ENCODE measurements at regions of chr6 and their contacts with region 1.

Region 1: GRCh38 chr6:125956506-125957390 is at the start of gene HINT3:
- DNase-seq: peak; percentile 94
- ATAC-seq: peak; percentile 87
- H3K4me3 ChIP-seq: peak within 1 kb of the TSS; percentile 71 to 99 (median 81)
- H3K27ac ChIP-seq: peak within 1 kb of the TSS; percentile 88
- H3K4me1 ChIP-seq: peaks cover 50% of the 10 kb centered on the region
- H3K27me3 ChIP-seq: no peaks in the 10 kb centered on the region; a peak in 1 of 5 replicates
- CTCF ChIP-seq: peak; percentile 100
- EP300 ChIP-seq: peak; percentile 22 to 73; a peak in 2 of 4 replicates
- POLR2A ChIP-seq: peak; percentile 52 to 63; a peak in 3 of 4 replicates
- RAD21 ChIP-seq: peak; percentile 98
- total RNA-seq, gene HINT3: 22.8 and 33.0 TPM in 2 replicates

Region 2: GRCh38 chr6:125301435-125302391 is 655.0 kb before region 1 on chr6 and contains the start of gene HDDC2:
- CTCF ChIA-PET with region 1: no interaction called
- POLR2A ChIA-PET with region 1: no interaction called
- in situ Hi-C with region 1: loop called (anchors 10 kb)
- intact Hi-C with region 1: no loop called
- DNase-seq: peak; percentile 68
- ATAC-seq: peak; percentile 99
- H3K4me3 ChIP-seq: peak within 1 kb of the TSS; percentile 54 to 85 (median 84)
- H3K27ac ChIP-seq: peak within 1 kb of the TSS; percentile 67
- H3K4me1 ChIP-seq: peaks cover 32% of the 10 kb centered on the region
- H3K27me3 ChIP-seq: peaks cover 0 to 4% of the 10 kb centered on the region in 2 experiments; a peak in 1 of 5 replicates
- CTCF ChIP-seq: peak; percentile 7; the same call in 1 of the 2 replicates
- EP300 ChIP-seq: peak in 1 of 2 experiments; percentile 38; a peak in 2 of 4 replicates
- POLR2A ChIP-seq: peak; percentile 82 to 83
- RAD21 ChIP-seq: peak; percentile 71
- total RNA-seq, gene HDDC2: 78.7 and 90.7 TPM in 2 replicates

Region 3: GRCh38 chr6:125779924-125780539 is 176.7 kb before region 1 on chr6:
- CTCF ChIA-PET with region 1: no interaction called
- POLR2A ChIA-PET with region 1: interaction called, 18 read pairs
- in situ Hi-C with region 1: no loop called
- intact Hi-C with region 1: loop called (anchors 1 kb)
- DNase-seq: peak; percentile 96
- ATAC-seq: peak; percentile 91
- H3K4me3 ChIP-seq: peak overlapping the region; percentile 60 to 85 (median 81)
- H3K27ac ChIP-seq: peak overlapping the region; percentile 83
- H3K4me1 ChIP-seq: peaks cover 30% of the 10 kb centered on the region
- H3K27me3 ChIP-seq: no peaks in the 10 kb centered on the region; a peak in 1 of 5 replicates
- CTCF ChIP-seq: no peak; the same call in 1 of the 2 replicates
- EP300 ChIP-seq: no peak; a peak in 1 of 4 replicates
- POLR2A ChIP-seq: no peak
- RAD21 ChIP-seq: no peak

Region 4: DNA sequence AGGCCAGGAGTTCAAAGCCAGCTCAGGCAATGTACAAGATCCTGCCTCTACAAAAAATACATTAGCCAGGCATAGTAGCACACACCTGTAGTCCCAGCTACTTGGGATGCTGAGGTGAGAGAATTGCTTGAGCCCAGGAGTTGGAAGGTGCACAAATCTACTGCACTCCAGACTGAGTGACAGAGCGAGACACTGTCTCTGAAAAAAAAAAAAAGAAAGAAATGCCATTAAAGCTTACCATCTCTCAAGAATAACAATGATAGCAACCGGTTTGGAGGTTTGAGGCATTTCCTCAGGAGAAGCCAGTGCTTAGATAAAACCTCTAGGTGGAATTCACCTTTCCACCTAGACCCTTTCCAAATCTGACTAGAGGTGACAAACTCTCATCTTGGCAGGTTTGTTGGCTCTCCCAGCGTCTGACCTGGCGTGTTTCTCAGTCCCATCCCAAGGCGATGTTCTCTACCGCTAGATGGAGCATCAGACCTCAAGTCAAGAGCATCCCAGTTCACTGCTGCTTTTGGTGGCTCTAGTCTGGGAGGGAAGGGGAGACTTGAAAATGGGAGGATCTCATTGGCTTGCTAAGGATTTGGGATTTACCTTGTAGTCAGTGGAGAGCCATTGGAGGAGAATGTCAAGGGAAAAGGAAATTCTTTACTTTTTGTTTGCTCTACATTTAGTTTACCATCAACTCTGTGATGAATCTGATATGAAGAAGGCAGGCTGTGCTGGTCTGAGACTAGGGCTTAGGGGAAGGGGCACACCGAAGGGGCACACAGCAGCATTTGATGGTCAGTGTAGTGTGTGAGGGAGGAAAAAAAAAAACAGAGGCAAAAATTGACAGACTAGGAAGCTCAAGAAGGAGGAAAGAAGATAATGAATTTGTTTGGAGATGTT is 98.1 kb before region 1 on chr6:
- CTCF ChIA-PET with region 1: interaction called, 23 read pairs
- POLR2A ChIA-PET with region 1: interaction called, 5 read pairs
- in situ Hi-C with region 1: loop called (anchors 5 kb)
- intact Hi-C with region 1: loop called (anchors 1 kb)
- DNase-seq: peak; percentile 80
- ATAC-seq: peak; percentile 100
- H3K4me3 ChIP-seq: no peak overlapping the region
- H3K27ac ChIP-seq: no peak overlapping the region
- H3K4me1 ChIP-seq: no peaks in the 10 kb centered on the region
- H3K27me3 ChIP-seq: no peaks in the 10 kb centered on the region
- CTCF ChIP-seq: peak; percentile 97
- EP300 ChIP-seq: no peak
- POLR2A ChIP-seq: no peak
- RAD21 ChIP-seq: peak; percentile 89

Region 5: GRCh38 chr6:125899726-125900182 is 57.0 kb before region 1 on chr6:
- CTCF ChIA-PET with region 1: interaction called, 7 read pairs
- POLR2A ChIA-PET with region 1: interaction called, 27 read pairs
- in situ Hi-C with region 1: no loop called
- intact Hi-C with region 1: no loop called
- DNase-seq: peak; percentile 86
- ATAC-seq: peak; percentile 99
- H3K4me3 ChIP-seq: peak overlapping the region; percentile 39 to 59 (median 56); a peak in 4 of 6 replicates
- H3K27ac ChIP-seq: peak overlapping the region; percentile 81
- H3K4me1 ChIP-seq: peaks cover 53% of the 10 kb centered on the region
- H3K27me3 ChIP-seq: no peaks in the 10 kb centered on the region
- CTCF ChIP-seq: peak; percentile 48
- EP300 ChIP-seq: peak in 1 of 2 experiments; percentile 58; a peak in 1 of 4 replicates
- POLR2A ChIP-seq: peak; percentile 54 to 56; a peak in 3 of 4 replicates
- RAD21 ChIP-seq: no peak

Region 6: GRCh38 chr6:125918681-125919566 is 37.8 kb before region 1 on chr6:
- CTCF ChIA-PET with region 1: no interaction called
- POLR2A ChIA-PET with region 1: interaction called, 28 read pairs
- in situ Hi-C with region 1: no loop called
- intact Hi-C with region 1: loop called (anchors 1 kb)
- DNase-seq: peak; percentile 97
- ATAC-seq: peak; percentile 97
- H3K4me3 ChIP-seq: peak overlapping the region; percentile 51 to 65 (median 52)
- H3K27ac ChIP-seq: peak overlapping the region; percentile 84
- H3K4me1 ChIP-seq: peaks cover 62% of the 10 kb centered on the region
- H3K27me3 ChIP-seq: no peaks in the 10 kb centered on the region
- CTCF ChIP-seq: no peak
- EP300 ChIP-seq: peak in 1 of 2 experiments; percentile 64; a peak in 2 of 4 replicates
- POLR2A ChIP-seq: peak; percentile 46 to 96; a peak in 3 of 4 replicates
- RAD21 ChIP-seq: no peak; the same call in 1 of the 2 replicates

Region 7: GRCh38 chr6:125974214-125974866 is 17.6 kb after region 1 on chr6:
- CTCF ChIA-PET with region 1: interaction called, 3 read pairs
- POLR2A ChIA-PET with region 1: no interaction called
- in situ Hi-C with region 1: no loop called
- intact Hi-C with region 1: loop called (anchors 1 kb)
- DNase-seq: peak; percentile 56
- ATAC-seq: peak; percentile 69
- H3K4me3 ChIP-seq: no peak overlapping the region
- H3K27ac ChIP-seq: no peak overlapping the region
- H3K4me1 ChIP-seq: no peaks in the 10 kb centered on the region
- H3K27me3 ChIP-seq: no peaks in the 10 kb centered on the region
- CTCF ChIP-seq: peak; percentile 65
- EP300 ChIP-seq: no peak
- POLR2A ChIP-seq: no peak
- RAD21 ChIP-seq: no peak

Region 8: GRCh38 chr6:126007800-126008199 is 51.1 kb after region 1 on chr6:
- CTCF ChIA-PET with region 1: no interaction called
- POLR2A ChIA-PET with region 1: no interaction called
- in situ Hi-C with region 1: no loop called
- intact Hi-C with region 1: no loop called
- DNase-seq: no peak
- ATAC-seq: no peak
- H3K4me3 ChIP-seq: no peak overlapping the region
- H3K27ac ChIP-seq: no peak overlapping the region
- H3K4me1 ChIP-seq: no peaks in the 10 kb centered on the region
- H3K27me3 ChIP-seq: no peaks in the 10 kb centered on the region
- CTCF ChIP-seq: no peak
- EP300 ChIP-seq: no peak
- POLR2A ChIP-seq: no peak
- RAD21 ChIP-seq: no peak

Region 9: DNA sequence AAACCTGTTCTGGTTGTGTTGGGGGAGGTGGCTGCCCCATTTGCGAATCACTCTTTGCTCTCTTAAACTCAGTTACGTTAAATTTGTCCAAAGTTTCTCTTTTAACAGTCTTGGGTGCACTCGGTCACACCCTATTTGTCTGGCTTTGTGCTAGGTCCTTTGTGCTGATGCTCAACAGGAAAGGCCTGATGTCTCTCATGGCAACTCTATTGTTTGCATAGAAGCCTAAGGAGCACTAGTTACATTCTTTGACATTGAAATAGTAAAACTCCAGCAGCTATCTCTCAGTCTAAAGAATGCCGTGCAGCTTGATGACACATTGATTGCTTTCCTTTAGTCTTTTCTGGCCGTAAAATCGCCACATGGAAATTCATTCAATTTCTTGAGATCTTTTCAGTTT is 134.8 kb after region 1 on chr6:
- CTCF ChIA-PET with region 1: no interaction called
- POLR2A ChIA-PET with region 1: no interaction called
- in situ Hi-C with region 1: no loop called
- intact Hi-C with region 1: no loop called
- DNase-seq: no peak
- ATAC-seq: no peak
- H3K4me3 ChIP-seq: no peak overlapping the region
- H3K27ac ChIP-seq: no peak overlapping the region
- H3K4me1 ChIP-seq: no peaks in the 10 kb centered on the region
- H3K27me3 ChIP-seq: no peaks in the 10 kb centered on the region
- CTCF ChIP-seq: no peak
- EP300 ChIP-seq: no peak
- POLR2A ChIP-seq: no peak
- RAD21 ChIP-seq: no peak